Heart left ventricle (tissue), 16 donors: ENCODE measurements at regions of chr2 and their contacts with region 1.

Region 1: GRCh38 chr2:42095923-42096408 is 48.1 kb downstream of the PKDCC start:
- DNase-seq: peak; percentile 59 to 79 (median 73)
- ATAC-seq: peak in 3 of 4 donors; percentile 30 to 55 (median 50)
- H3K4me3 ChIP-seq: no peak overlapping the region
- H3K27ac ChIP-seq: no peak overlapping the region
- H3K4me1 ChIP-seq: peaks cover 0 to 64% (median 11%) of the 10 kb centered on the region in 12 donors
- H3K27me3 ChIP-seq: no peaks in the 10 kb centered on the region
- CTCF ChIP-seq: peak; percentile 77 to 93 (median 85)
- POLR2A ChIP-seq: no peak

Region 2: DNA sequence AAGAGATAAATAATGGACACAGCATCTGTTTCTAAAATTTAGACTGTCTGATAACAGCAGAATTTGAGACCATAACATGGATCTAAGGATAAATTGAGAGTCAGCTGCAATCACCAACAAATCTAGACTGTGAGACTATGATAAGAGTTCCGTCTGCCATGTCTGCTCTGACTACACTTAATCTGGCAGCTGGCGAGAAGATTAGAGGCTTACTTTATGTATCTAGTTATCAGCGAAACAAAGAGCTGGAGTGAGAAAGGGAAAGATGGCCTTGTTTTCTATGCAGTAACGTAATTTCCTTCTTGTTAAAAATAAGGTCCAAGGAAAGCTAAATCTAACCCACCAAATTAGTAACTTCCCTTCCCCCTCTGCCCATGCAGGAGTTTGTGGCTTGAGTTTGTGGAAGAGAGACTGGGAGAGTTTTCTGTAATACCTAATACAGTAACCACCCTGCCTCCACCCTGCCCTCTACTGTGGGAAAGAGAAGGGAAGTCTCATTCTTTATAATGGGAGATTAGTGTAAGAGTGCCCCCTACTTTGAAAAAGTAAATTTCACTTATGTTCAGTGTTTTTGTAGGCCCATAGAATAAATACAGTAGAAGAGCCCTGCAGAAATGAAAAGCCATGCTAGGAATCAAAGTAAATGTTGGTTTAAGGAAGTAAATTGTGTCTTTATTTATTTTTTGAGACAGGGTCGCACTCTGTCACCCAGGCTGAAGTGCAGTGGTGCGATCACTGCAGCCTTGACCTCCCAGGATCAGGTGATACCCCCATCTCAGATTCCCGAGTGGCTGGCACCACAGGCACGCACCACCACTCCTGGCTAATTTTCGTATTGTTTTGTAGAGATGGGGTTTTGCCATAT is 100.7 kb after region 1 on chr2:
- intact Hi-C with region 1: loop called (anchors 1 to 10 kb)
- DNase-seq: peak in 4 of 5 donors; percentile 34 to 57 (median 39)
- ATAC-seq: peak; percentile 32 to 93 (median 80)
- H3K4me3 ChIP-seq: no peak overlapping the region
- H3K27ac ChIP-seq: peak overlapping the region in 2 of 12 donors; percentile 26 to 40
- H3K4me1 ChIP-seq: peaks cover 0 to 71% (median 9%) of the 10 kb centered on the region in 12 donors
- H3K27me3 ChIP-seq: no peaks in the 10 kb centered on the region
- CTCF ChIP-seq: peak; percentile 27 to 76 (median 61)
- POLR2A ChIP-seq: no peak

Region 3: DNA sequence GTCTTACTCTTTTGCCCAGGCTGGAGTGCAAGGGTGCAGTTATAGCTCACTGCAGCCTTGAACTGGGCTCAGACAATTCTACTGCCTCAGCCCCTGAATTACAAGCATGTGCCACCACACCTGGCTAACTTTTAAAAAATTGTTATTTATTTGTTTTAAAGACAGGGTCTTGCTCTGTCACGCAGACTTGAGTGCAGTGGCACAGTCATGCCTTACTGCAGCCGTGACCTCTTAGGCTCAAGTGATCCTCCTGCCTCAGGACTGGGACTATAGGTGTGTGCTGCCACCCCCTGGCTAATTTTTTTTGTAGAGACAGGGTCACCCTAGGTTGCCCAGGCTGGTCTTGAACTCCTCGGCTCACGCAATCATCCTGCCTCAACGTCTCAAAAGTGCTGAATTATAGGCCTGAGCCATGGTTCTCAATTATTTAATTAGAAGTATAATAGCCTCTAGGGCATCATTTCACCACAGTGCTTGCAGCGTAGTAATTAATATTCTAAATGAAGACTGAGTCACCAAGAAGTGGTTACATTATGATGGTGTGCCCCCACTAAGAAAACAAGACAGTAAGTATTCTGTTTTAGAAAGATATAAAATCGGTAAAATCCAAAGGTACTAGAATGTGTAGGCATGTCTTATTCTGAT is 142.8 kb after region 1 on chr2:
- intact Hi-C with region 1: loop called (anchors 1 to 5 kb)
- DNase-seq: peak in 4 of 5 donors; percentile 25 to 50 (median 30)
- ATAC-seq: peak in 3 of 4 donors; percentile 89 to 92 (median 91)
- H3K4me3 ChIP-seq: no peak overlapping the region
- H3K27ac ChIP-seq: no peak overlapping the region
- H3K4me1 ChIP-seq: peaks cover 0 to 40% (median 11%) of the 10 kb centered on the region in 12 donors
- H3K27me3 ChIP-seq: no peaks in the 10 kb centered on the region
- CTCF ChIP-seq: peak in 11 of 12 donors; percentile 26 to 64 (median 53)
- POLR2A ChIP-seq: no peak

Region 4: DNA sequence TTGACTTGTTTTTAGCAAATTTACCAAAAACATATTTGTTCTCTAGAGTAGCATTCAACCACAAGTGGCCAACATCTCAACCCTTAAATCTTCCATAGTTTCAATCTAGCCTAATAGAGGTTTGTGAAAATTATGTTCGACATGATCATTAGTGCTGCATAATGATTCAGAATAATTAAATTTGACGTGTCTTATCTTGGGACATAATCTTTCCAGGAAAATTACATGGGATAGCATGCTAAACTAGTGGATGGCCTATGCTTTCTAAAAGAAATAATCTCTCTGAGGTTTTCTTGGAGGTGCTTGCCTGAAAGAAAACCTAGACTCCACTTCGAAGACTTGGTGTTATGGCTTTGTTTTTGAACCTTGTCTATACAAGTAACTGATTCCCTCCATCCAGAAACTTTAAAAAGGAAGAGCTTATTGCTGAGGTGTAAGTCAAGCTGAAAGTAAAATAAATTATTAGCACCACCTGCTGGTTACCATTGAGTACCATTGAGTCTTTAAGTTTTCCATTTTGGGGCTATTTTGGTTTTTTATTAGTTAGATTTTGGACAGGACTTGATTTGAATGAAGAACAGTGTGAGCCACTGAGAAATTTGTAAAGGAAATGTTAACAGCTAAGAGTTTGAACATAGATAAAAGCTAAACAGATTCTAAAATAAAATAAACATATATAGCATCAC is 232.3 kb after region 1 on chr2:
- intact Hi-C with region 1: loop called in 9 of 10 experiments (anchors 1 to 10 kb)
- DNase-seq: no peak
- ATAC-seq: peak in 1 of 4 donors; percentile 34
- H3K4me3 ChIP-seq: no peak overlapping the region
- H3K27ac ChIP-seq: no peak overlapping the region
- H3K4me1 ChIP-seq: no peaks in the 10 kb centered on the region
- H3K27me3 ChIP-seq: no peaks in the 10 kb centered on the region
- CTCF ChIP-seq: peak in 11 of 12 donors; percentile 22 to 57 (median 43)
- POLR2A ChIP-seq: no peak

Region 5: DNA sequence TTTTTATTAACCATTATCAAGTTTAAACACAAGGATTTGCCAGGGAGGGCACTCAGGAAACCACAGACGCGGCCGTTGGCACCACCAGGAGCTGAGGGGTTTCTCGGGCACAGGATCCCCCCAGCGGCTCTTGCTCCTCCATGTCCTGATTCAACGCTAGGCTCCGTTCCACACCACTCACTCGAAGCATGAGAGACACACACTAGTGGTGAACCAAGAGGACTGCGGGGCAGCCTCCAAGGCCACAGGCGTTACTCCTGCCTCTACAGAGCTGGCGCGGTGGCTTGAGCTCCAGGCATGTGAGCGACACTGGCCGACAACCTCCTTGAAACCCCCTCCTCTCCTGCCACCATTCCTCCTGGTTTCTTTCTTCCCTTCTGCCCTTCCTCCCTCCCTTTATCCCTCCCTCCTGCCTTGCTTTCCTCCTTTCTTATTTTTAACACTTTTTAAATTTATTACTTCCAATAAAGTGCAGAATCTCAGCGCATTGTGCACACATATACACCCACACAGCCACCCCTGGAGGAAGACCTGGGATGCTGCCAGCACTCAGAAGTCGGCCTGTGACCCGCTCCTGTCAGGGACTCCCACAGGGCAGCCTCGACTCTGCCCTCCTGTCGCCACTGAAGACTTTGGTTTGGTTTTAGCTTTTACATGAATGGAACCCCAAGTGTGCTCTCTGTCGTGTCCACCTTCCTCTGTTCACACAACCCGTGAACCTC is 243.4 kb after region 1 on chr2:
- intact Hi-C with region 1: loop called in 1 of 10 experiments (anchors 10 kb)
- DNase-seq: no peak
- ATAC-seq: no peak
- H3K4me3 ChIP-seq: no peak overlapping the region
- H3K27ac ChIP-seq: no peak overlapping the region
- H3K4me1 ChIP-seq: peaks cover 0 to 23% (median 17%) of the 10 kb centered on the region in 12 donors
- H3K27me3 ChIP-seq: no peaks in the 10 kb centered on the region
- CTCF ChIP-seq: no peak
- POLR2A ChIP-seq: no peak

Region 6: DNA sequence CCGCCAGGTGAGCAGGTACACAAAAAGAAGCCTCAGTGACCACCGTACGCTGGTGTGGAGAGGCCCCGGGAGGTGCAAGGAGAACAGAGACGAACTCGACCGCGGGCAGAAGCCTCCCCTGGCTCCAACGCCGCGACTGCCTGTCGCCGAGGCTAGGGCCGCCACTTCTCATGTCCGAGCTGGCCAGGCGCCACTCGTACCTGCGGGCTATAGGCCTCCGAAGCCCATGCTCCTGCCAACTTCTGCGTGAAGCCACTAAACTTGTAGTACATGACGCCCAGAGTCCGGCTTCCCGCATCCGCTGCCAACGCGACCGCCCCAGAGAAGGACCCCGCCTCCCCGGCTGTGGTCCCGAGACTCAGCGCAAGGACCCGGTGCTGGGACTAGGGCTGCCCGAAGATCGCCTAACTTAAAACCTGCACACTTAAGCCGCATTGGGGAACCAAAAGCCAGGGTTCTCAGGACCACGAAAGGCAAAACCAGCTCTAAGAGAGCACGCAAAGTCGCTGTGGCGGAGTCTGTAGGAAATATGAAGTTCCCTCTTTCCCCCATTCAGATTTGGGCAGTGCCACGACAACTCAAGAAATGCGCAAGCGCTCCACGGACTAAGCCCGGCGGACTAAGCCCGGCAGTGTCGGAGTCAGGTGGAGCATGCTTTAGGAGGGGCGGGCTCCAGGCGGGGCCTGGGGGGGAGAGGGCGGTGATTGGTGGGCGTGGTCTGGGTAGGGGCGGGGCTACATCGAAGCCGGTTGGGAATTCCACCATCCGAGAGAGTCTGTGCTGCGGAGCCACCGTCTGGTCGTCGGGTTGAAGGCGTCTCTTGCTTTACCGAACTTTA is 265.1 kb after region 1 on chr2 and contains the start of gene COX7A2L:
- intact Hi-C with region 1: loop called in 8 of 10 experiments (anchors 2 to 10 kb)
- DNase-seq: peak; percentile 96 to 98 (median 98)
- ATAC-seq: peak; percentile 99 to 100 (median 99)
- H3K4me3 ChIP-seq: peak within 1 kb of the TSS; percentile 77 to 100 (median 94)
- H3K27ac ChIP-seq: peak within 1 kb of the TSS; percentile 90 to 100 (median 94)
- H3K4me1 ChIP-seq: peaks cover 0 to 36% (median 27%) of the 10 kb centered on the region in 12 donors
- H3K27me3 ChIP-seq: no peaks in the 10 kb centered on the region
- CTCF ChIP-seq: peak in 10 of 12 donors; percentile 9 to 57 (median 32)
- POLR2A ChIP-seq: peak in 1 of 2 donors; percentile 47
- total RNA-seq, gene COX7A2L: 87.0 to 138 (median 105) TPM